ENCODE measurements at regions of chr12 and their contacts with region 1.

Region 1: GRCh38 chr12:34033628-34034282 is 11.5 kb downstream of the ALG10 start:
- DNase-seq: peak; percentile 13
- ATAC-seq: no peak
- H3K4me3 ChIP-seq: no peak overlapping the region
- H3K27ac ChIP-seq: no peak overlapping the region
- H3K4me1 ChIP-seq: no peaks in the 10 kb centered on the region
- H3K27me3 ChIP-seq: no peaks in the 10 kb centered on the region
- CTCF ChIP-seq: peak in 2 of 3 experiments; percentile 32 to 40; a peak in 3 of 6 replicates
- POLR2A ChIP-seq: no peak
- RAD21 ChIP-seq: peak; percentile 34; the same call in 1 of the 2 replicates

Region 2: DNA sequence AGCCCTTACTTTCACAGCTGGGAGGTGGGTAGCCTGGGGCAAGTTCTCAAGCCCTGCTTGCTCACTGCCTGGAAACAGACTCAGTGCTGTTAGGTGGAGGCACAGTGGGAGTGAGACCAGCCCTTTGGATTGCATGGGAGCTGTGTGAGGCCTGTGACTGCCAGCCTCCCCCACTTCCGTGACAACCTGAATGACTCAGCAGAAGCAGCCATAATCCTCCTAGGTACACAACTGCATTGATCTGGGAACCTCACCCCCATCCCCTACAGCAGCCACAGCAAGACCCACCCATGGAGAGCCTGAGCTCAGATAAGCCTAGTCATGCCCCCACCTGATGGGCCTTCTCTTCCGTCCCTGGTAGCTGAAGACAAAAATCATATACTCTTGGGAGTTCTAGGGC is 15.0 kb after region 1 on chr12:
- CTCF ChIA-PET with region 1: no interaction called
- POLR2A ChIA-PET with region 1: no interaction called
- RAD21 ChIA-PET with region 1: no interaction called
- intact Hi-C with region 1: no loop called
- DNase-seq: no peak
- ATAC-seq: no peak
- H3K4me3 ChIP-seq: no peak overlapping the region
- H3K27ac ChIP-seq: no peak overlapping the region
- H3K4me1 ChIP-seq: no peaks in the 10 kb centered on the region
- H3K27me3 ChIP-seq: no peaks in the 10 kb centered on the region
- CTCF ChIP-seq: no peak
- POLR2A ChIP-seq: no peak
- RAD21 ChIP-seq: no peak

Region 3: GRCh38 chr12:34218165-34219045 is 184.7 kb after region 1 on chr12:
- CTCF ChIA-PET with region 1: no interaction called
- POLR2A ChIA-PET with region 1: no interaction called
- RAD21 ChIA-PET with region 1: no interaction called
- intact Hi-C with region 1: loop called (anchors 1 kb)
- DNase-seq: peak; percentile 52
- ATAC-seq: peak; percentile 84
- H3K4me3 ChIP-seq: no peak overlapping the region
- H3K27ac ChIP-seq: no peak overlapping the region
- H3K4me1 ChIP-seq: no peaks in the 10 kb centered on the region
- H3K27me3 ChIP-seq: no peaks in the 10 kb centered on the region
- CTCF ChIP-seq: peak; percentile 70 to 84 (median 83)
- POLR2A ChIP-seq: no peak
- RAD21 ChIP-seq: peak; percentile 65

Region 4: DNA sequence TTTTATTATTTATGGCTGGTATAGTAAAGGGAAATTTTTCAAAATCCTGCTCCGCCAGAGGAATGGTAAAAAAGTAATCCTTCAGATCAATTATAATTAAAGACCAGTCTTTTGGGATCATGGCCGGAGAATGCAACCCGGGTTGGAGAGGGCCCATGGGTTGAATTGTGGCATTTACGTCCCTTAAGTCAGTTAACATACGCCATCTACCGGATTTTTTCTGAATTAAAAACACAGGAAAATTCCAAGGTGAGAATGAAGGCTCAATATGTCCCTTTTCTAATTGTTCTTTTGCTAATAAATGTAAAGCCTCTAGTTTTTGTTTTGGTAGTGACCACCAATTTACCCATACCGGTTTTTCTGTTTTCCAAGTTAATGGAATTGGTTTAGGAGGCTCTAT is 591.4 kb after region 1 on chr12:
- CTCF ChIA-PET with region 1: no interaction called
- POLR2A ChIA-PET with region 1: no interaction called
- RAD21 ChIA-PET with region 1: no interaction called
- intact Hi-C with region 1: loop called (anchors 1 kb)
- DNase-seq: peak; percentile 7
- ATAC-seq: no peak
- H3K4me3 ChIP-seq: no peak overlapping the region
- H3K27ac ChIP-seq: no peak overlapping the region
- H3K4me1 ChIP-seq: no peaks in the 10 kb centered on the region
- H3K27me3 ChIP-seq: no peaks in the 10 kb centered on the region
- CTCF ChIP-seq: peak in 2 of 3 experiments; percentile 21 to 44; a peak in 4 of 6 replicates
- POLR2A ChIP-seq: no peak
- RAD21 ChIP-seq: peak; percentile 37